ENCODE measurements at regions of chr5 and their contacts with region 1.

Region 1: DNA sequence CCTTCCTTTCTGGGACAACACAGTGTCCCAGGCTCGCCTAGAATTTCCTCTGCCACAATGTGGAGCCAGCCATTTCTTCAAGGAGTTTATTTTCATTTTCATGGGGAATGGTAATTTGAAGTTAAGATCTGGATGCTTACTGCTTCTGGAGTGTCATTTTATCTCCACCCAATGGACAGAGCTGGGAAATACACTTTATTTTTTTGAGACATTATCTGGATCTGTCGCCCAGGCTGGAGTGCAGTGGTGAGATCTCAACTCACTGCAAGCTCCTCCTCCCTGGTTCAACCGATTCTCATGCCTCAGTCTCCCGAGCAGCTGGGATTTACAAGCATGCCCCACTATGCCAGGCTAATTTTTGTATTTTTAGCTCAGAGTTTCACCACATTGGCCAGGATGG is 12.7 kb upstream of the THG1L start:
- DNase-seq: peak; percentile 69
- H3K4me3 Mint-ChIP-seq: no peak overlapping the region
- H3K27ac Mint-ChIP-seq: no peak overlapping the region
- H3K4me1 Mint-ChIP-seq: no peaks in the 10 kb centered on the region
- H3K27me3 Mint-ChIP-seq: no peaks in the 10 kb centered on the region
- CTCF ChIP-seq: peak; percentile 83

Region 2: DNA sequence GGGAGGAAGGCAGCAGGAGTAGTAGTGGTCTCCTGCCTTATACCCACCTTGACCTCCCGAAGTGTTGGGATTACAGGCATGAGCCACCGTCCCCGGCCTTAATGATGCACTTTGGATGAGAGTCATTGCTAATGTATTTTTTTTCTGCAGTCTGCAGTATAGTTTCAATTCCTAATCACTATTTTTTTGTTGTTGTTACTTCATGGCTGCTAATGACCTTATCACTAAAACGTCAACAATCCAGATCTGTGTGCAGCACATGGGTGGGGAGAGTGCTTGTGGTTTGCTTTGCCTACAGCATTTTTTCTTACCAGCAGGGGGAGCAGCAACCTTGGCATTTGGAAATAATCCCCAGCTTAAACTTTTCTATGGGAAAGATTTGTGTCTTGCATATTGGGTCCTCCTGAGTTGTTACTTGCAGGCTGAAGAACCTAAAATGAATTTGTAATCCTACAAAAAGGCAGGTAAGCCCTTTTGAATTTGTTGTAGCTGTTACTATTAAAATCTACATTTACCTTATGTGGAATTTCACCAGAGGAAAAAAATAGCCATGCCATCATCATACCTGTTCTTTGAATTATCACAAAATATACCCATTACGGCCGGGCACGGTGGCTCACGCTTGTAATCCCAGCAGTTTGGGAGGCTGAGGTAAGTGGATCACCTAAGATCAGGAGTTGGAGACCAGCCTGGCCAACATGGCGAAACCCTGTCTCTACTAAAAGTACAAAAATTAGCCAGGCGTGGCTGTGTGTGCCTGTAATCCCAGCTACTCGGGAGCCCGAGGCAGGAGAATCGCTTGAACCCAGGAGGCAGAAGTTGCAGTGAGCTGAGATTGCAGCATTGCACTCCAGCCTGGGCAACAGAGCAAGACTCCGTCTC is 569.5 kb before region 1 on chr5:
- CTCF ChIA-PET with region 1: interaction called, 12 read pairs
- POLR2A ChIA-PET with region 1: no interaction called
- intact Hi-C with region 1: loop called (anchors 5 kb)
- DNase-seq: peak; percentile 81
- H3K4me3 Mint-ChIP-seq: no peak overlapping the region
- H3K27ac Mint-ChIP-seq: no peak overlapping the region
- H3K4me1 Mint-ChIP-seq: peaks cover 6% of the 10 kb centered on the region
- H3K27me3 Mint-ChIP-seq: no peaks in the 10 kb centered on the region
- CTCF ChIP-seq: peak; percentile 90

Region 3: GRCh38 chr5:157390551-157391297 is 327.8 kb before region 1 on chr5:
- CTCF ChIA-PET with region 1: interaction called, 21 read pairs
- POLR2A ChIA-PET with region 1: no interaction called
- intact Hi-C with region 1: no loop called
- DNase-seq: peak; percentile 98
- H3K4me3 Mint-ChIP-seq: no peak overlapping the region
- H3K27ac Mint-ChIP-seq: peak overlapping the region; percentile 76
- H3K4me1 Mint-ChIP-seq: peaks cover 23% of the 10 kb centered on the region
- H3K27me3 Mint-ChIP-seq: no peaks in the 10 kb centered on the region
- CTCF ChIP-seq: no peak

Region 4: GRCh38 chr5:157449011-157449723 is 269.4 kb before region 1 on chr5:
- CTCF ChIA-PET with region 1: interaction called, 10 read pairs
- POLR2A ChIA-PET with region 1: interaction called, 3 read pairs
- intact Hi-C with region 1: no loop called
- DNase-seq: peak; percentile 47
- H3K4me3 Mint-ChIP-seq: no peak overlapping the region
- H3K27ac Mint-ChIP-seq: no peak overlapping the region
- H3K4me1 Mint-ChIP-seq: peaks cover 19% of the 10 kb centered on the region
- H3K27me3 Mint-ChIP-seq: no peaks in the 10 kb centered on the region
- CTCF ChIP-seq: no peak

Region 5: GRCh38 chr5:157476702-157477408 is 241.7 kb before region 1 on chr5:
- CTCF ChIA-PET with region 1: interaction called, 113 read pairs
- POLR2A ChIA-PET with region 1: no interaction called
- intact Hi-C with region 1: loop called (anchors 1 kb)
- DNase-seq: peak; percentile 93
- H3K4me3 Mint-ChIP-seq: no peak overlapping the region
- H3K27ac Mint-ChIP-seq: no peak overlapping the region
- H3K4me1 Mint-ChIP-seq: no peaks in the 10 kb centered on the region
- H3K27me3 Mint-ChIP-seq: no peaks in the 10 kb centered on the region
- CTCF ChIP-seq: peak; percentile 97

Region 6: DNA sequence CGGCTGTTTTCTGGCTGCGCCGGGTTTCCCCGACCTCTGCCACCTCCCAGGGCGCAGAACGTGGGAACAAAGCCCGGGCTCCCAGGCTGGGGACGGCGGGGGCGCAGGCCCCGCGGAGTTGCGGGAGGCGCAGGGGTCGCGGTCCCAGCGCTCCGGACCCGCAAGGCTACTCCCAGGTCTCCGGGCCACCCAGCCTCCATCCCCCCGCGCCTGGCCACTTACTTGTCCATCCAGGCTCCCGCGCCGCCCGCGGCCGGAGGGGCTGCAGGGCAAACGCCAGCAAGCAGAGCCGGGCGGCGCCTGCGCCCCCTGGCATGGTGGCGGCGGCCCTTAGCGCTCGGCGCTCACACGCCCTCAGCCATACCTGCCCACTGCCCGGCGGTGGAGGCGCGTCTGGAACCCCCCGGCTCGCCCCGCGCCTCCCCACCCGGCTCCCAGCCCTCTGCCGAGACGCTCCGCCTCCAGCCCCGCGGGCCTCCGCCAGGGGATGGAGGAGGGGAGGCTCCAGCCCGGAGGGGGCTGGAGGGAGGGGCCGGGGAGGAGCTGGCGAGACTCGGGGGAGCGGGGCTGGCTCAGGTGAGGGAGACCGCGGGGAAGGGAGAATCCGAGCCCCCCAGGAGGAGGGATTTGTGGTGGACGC is 143.0 kb before region 1 on chr5 and contains the start of gene ADAM19:
- CTCF ChIA-PET with region 1: no interaction called
- POLR2A ChIA-PET with region 1: no interaction called
- intact Hi-C with region 1: loop called (anchors 10 kb)
- DNase-seq: peak; percentile 27
- H3K4me3 Mint-ChIP-seq: peak within 1 kb of the TSS; percentile 73
- H3K27ac Mint-ChIP-seq: no peak within 1 kb of the TSS
- H3K4me1 Mint-ChIP-seq: peaks cover 13% of the 10 kb centered on the region
- H3K27me3 Mint-ChIP-seq: no peaks in the 10 kb centered on the region
- CTCF ChIP-seq: no peak
- total RNA-seq, gene ADAM19: 0.47 and 0.96 TPM in 2 replicates

Region 7: DNA sequence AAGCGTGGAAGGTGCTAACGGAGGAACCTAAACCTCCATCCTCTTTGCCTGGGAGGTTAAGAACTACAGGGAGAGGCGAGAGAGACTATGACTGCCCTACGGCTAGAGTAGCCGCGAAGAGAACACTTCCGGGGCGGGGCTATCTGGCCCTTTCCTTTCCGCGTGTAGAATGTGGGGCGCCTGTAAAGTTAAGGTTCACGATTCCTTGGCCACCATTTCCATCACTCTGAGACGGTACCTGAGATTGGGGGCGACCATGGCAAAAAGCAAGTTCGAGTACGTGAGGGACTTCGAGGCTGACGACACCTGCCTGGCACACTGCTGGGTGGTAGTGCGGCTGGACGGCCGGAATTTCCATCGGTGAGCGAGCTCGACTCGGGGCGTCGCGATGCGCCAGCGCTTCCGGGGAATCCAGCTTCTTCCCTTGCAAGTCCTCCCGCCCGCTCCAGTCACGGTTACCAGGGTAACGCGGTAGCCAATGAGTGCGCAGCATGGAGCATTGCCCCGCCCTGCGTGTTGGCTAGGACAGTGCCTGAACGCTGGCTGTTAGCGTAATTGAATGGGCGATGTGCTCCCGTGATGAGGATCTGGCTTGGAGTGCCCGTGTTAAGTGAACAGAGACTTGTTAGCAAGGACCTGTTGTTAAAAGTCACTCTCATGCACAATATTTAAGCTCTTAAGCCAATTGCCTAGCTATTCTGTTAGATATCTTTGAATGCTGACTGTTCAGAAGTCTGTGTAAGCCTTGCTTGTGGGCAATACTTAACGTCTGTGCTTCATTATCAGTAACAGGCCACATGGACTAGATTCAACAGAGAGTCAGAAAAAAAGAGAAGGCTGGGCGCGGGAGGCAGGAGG is 13.0 kb after region 1 on chr5 and contains the start of gene THG1L:
- CTCF ChIA-PET with region 1: interaction called, 10 read pairs
- POLR2A ChIA-PET with region 1: interaction called, 7 read pairs
- intact Hi-C with region 1: no loop called
- DNase-seq: peak; percentile 100
- H3K4me3 Mint-ChIP-seq: peak within 1 kb of the TSS; percentile 97
- H3K27ac Mint-ChIP-seq: peak within 1 kb of the TSS; percentile 98
- H3K4me1 Mint-ChIP-seq: peaks cover 14% of the 10 kb centered on the region
- H3K27me3 Mint-ChIP-seq: no peaks in the 10 kb centered on the region
- CTCF ChIP-seq: no peak
- total RNA-seq, gene THG1L: 21.1 and 29.9 TPM in 2 replicates

Region 8: GRCh38 chr5:158553195-158553961 is 834.9 kb after region 1 on chr5:
- CTCF ChIA-PET with region 1: no interaction called
- POLR2A ChIA-PET with region 1: no interaction called
- intact Hi-C with region 1: no loop called
- DNase-seq: no peak
- H3K4me3 Mint-ChIP-seq: no peak overlapping the region
- H3K27ac Mint-ChIP-seq: no peak overlapping the region
- H3K4me1 Mint-ChIP-seq: no peaks in the 10 kb centered on the region
- H3K27me3 Mint-ChIP-seq: no peaks in the 10 kb centered on the region
- CTCF ChIP-seq: no peak